Activated CD4-positive, alpha-beta T cell treated with anti-CD3 and anti-CD28 coated beads for 36 hours (primary cell): ENCODE measurements at regions of chr2 and their contacts with region 1.

Region 1: DNA sequence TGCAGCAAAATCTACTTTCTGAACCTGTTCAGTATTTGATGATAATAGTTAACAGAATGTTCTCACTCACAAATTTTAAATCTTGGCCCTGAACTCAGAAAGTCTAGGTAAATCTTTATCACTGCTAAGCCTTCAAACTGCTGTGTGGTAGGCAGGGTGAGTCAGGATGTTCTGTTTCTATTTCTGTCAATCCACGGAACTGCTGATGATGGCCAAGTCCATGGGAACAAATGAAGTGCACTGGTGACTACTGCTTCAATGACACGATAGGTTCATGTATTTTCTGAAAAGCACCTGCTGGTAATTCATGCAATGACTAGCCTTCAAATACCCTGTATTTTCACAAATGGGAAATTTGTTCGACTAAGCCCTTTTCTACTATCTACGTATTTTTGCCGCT is 14.2 kb downstream of the NIFK start:
- DNase-seq: peak; percentile 68
- ATAC-seq: peak; percentile 92
- H3K4me3 Mint-ChIP-seq: peak overlapping the region; percentile 45
- H3K27ac Mint-ChIP-seq: peak overlapping the region; percentile 96
- H3K4me1 Mint-ChIP-seq: peaks cover 30% of the 10 kb centered on the region
- H3K27me3 Mint-ChIP-seq: no peaks in the 10 kb centered on the region

Region 2: DNA sequence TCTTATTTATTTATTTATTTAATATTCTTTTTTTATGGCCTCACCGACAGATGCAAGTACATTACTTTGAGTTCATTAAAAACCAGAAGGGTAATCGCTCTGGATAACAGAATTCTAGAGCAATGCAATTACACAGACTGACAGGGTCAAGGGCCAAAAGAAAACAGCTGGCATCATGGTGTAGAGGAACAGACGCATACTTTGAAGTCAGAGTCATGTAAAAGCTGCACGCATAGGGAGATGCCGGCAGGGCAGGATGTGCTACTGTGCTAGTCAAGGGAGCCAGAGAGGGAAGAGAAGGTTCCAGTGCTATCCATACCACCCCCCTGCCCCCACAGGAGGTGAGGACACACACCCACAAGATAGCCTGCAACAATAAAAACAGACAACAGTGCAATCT is 322.3 kb before region 1 on chr2:
- CTCF ChIA-PET with region 1: interaction called, 8 read pairs
- POLR2A ChIA-PET with region 1: interaction called, 13 read pairs
- intact Hi-C with region 1: loop called (anchors 1 kb)
- DNase-seq: no peak
- ATAC-seq: no peak
- H3K4me3 Mint-ChIP-seq: no peak overlapping the region
- H3K27ac Mint-ChIP-seq: no peak overlapping the region
- H3K4me1 Mint-ChIP-seq: peaks cover 2% of the 10 kb centered on the region
- H3K27me3 Mint-ChIP-seq: no peaks in the 10 kb centered on the region

Region 3: DNA sequence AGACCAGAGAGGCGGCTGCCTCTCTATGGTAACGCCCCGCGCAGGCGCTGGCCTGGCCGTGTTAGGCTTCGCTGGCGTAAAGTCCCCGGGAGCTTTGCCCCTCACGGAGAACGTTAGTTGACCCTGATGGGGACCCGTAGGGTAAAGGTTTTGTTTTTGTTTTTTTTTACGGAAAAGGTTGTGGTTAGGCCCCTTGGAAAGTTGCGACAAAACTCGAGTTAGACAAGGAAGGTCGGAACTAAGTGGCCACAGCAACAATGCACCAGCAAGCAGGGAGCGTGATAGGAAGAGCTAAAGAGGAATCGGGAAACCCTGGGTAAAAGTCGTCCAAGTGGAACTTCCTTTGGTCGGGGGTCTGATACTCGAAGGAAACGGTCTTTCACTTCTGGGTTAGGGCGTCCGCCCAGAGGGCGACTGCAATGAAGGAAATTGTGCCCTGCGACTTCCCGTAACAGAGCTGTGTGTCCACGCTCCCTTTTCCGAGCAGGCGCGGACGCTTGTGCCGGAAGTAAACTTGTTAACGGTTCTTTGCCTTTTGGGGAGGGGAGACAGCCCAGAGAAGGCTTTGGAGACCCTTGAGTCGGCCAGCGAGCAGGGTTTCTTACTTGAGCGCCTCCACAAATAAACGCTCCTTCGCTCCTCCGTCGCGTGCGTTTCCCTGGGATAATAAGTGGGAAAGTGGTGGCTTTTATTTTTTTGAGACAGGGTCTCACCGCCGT is 72.7 kb before region 1 on chr2:
- CTCF ChIA-PET with region 1: interaction called, 3 read pairs
- POLR2A ChIA-PET with region 1: interaction called, 5 read pairs
- intact Hi-C with region 1: loop called (anchors 1 kb)
- DNase-seq: peak; percentile 97
- ATAC-seq: peak; percentile 95
- H3K4me3 Mint-ChIP-seq: peak overlapping the region; percentile 89
- H3K27ac Mint-ChIP-seq: peak overlapping the region; percentile 100
- H3K4me1 Mint-ChIP-seq: peaks cover 61% of the 10 kb centered on the region
- H3K27me3 Mint-ChIP-seq: no peaks in the 10 kb centered on the region

Region 4: GRCh38 chr2:121736462-121737341 is 14.2 kb after region 1 on chr2 and contains the start of gene NIFK:
- CTCF ChIA-PET with region 1: interaction called, 15 read pairs
- POLR2A ChIA-PET with region 1: interaction called, 4 read pairs
- intact Hi-C with region 1: loop called in 1 of 2 experiments (anchors 1 kb)
- DNase-seq: peak; percentile 100
- ATAC-seq: peak; percentile 91
- H3K4me3 Mint-ChIP-seq: peak within 1 kb of the TSS; percentile 83
- H3K27ac Mint-ChIP-seq: peak within 1 kb of the TSS; percentile 97
- H3K4me1 Mint-ChIP-seq: peaks cover 40% of the 10 kb centered on the region
- H3K27me3 Mint-ChIP-seq: no peaks in the 10 kb centered on the region
- total RNA-seq, gene NIFK: 148 to 213 TPM

Region 5: GRCh38 chr2:121994238-121995206 is 272.0 kb after region 1 on chr2:
- CTCF ChIA-PET with region 1: no interaction called
- POLR2A ChIA-PET with region 1: no interaction called
- intact Hi-C with region 1: no loop called
- DNase-seq: no peak
- ATAC-seq: no peak
- H3K4me3 Mint-ChIP-seq: no peak overlapping the region
- H3K27ac Mint-ChIP-seq: no peak overlapping the region
- H3K4me1 Mint-ChIP-seq: no peaks in the 10 kb centered on the region
- H3K27me3 Mint-ChIP-seq: no peaks in the 10 kb centered on the region